Prostate gland (tissue), 2 donors: ENCODE measurements at regions of chr12 and their contacts with region 1.

Region 1: GRCh38 chr12:67648521-67649260 is at the start of gene DYRK2:
- DNase-seq: peak; percentile 75
- H3K4me3 ChIP-seq: peak within 1 kb of the TSS; percentile 86 to 98
- H3K27ac ChIP-seq: peak within 1 kb of the TSS; percentile 87 to 90
- H3K4me1 ChIP-seq: peaks cover 3% of the 10 kb centered on the region
- H3K27me3 ChIP-seq: no peaks in the 10 kb centered on the region
- CTCF ChIP-seq: peak in 2 of 4 experiments; percentile 15 to 18
- POLR2A ChIP-seq: peak; percentile 86
- total RNA-seq, gene DYRK2: 16.7 to 31.9 TPM

Region 2: DNA sequence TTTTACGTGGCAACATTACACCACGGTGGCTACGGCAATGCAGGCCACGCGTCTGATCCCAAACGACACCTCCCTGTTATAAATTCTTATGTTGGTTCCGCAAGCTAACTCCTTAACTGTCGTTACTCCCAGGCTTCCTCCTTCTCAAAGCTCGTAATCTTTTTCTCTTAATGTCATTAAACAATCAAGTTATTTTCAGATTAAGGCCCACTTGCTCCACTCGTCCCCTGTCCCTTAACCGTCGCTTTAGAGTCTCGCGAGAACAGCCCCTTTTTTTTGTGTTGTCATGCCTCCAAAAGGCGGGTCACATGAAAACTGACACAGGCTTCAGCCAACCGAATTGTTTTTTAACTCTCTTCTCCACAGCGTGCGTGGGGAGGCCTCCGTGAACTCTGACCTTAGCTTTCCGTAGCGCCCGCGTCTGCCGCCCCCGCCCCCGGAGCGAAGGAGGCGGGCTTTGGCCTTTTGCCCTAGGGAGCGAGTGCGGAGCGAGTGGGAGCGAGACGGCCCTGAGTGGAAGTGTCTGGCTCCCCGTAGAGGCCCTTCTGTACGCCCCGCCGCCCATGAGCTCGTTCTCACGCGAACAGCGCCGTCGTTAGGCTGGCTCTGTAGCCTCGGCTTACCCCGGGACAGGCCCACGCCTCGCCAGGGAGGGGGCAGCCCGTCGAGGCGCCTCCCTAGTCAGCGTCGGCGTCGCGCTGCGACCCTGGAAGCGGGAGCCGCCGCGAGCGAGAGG is 379.6 kb before region 1 on chr12 and contains the start of gene CAND1:
- intact Hi-C with region 1: loop called (anchors 10 kb)
- DNase-seq: peak; percentile 98
- H3K4me3 ChIP-seq: peak within 1 kb of the TSS; percentile 67 to 88
- H3K27ac ChIP-seq: peak within 1 kb of the TSS; percentile 98 to 99
- H3K4me1 ChIP-seq: no peaks in the 10 kb centered on the region
- H3K27me3 ChIP-seq: no peaks in the 10 kb centered on the region
- CTCF ChIP-seq: no peak
- POLR2A ChIP-seq: peak; percentile 90
- total RNA-seq, gene CAND1: 65.1 to 118 TPM

Region 3: DNA sequence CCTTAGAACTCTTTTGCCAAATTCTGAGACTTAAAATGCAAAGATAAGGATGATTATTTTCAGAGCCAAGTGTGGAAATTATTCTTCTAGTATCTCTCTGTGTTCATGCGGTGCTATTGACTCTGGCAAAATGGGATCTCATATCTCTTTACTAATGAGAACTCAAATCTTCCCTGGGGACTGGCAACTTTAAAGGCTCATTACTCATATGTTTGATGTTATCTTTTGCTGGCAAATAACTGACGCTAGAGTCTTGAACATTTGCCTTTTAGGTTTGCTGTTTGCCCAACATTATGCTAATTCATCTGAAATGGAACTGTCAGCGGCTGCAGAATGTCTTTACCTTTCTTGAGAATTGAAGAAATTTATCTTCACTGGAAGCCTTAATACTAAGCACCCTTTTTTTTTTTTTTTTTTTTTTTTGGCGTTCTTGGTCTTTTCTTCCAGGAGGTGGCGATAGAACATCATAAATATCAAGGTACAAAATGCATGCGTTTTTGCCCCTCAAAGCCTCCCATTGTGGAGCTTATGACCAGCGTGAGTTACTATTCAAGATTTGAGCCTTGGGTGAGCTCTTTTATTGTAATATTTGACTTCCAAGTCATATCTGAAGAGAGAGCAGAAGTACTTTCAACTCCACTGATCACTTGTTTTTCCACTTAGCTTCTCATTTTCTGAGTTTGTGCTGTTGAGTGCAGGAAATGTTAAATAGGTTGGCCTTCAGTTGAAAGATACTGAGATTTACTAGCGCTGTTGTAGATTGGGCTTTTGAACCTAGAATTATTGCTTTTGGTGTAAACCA is 292.9 kb before region 1 on chr12:
- intact Hi-C with region 1: loop called (anchors 5 kb)
- DNase-seq: no peak
- H3K4me3 ChIP-seq: no peak overlapping the region
- H3K27ac ChIP-seq: no peak overlapping the region
- H3K4me1 ChIP-seq: no peaks in the 10 kb centered on the region
- H3K27me3 ChIP-seq: no peaks in the 10 kb centered on the region
- CTCF ChIP-seq: peak in 3 of 4 experiments; percentile 34 to 48 (median 34)
- POLR2A ChIP-seq: no peak

Region 4: GRCh38 chr12:67441736-67442346 is 206.8 kb before region 1 on chr12:
- intact Hi-C with region 1: loop called (anchors 5 kb)
- DNase-seq: peak; percentile 61
- H3K4me3 ChIP-seq: no peak overlapping the region
- H3K27ac ChIP-seq: no peak overlapping the region
- H3K4me1 ChIP-seq: no peaks in the 10 kb centered on the region
- H3K27me3 ChIP-seq: no peaks in the 10 kb centered on the region
- CTCF ChIP-seq: peak; percentile 30 to 72 (median 62)
- POLR2A ChIP-seq: no peak

Region 5: DNA sequence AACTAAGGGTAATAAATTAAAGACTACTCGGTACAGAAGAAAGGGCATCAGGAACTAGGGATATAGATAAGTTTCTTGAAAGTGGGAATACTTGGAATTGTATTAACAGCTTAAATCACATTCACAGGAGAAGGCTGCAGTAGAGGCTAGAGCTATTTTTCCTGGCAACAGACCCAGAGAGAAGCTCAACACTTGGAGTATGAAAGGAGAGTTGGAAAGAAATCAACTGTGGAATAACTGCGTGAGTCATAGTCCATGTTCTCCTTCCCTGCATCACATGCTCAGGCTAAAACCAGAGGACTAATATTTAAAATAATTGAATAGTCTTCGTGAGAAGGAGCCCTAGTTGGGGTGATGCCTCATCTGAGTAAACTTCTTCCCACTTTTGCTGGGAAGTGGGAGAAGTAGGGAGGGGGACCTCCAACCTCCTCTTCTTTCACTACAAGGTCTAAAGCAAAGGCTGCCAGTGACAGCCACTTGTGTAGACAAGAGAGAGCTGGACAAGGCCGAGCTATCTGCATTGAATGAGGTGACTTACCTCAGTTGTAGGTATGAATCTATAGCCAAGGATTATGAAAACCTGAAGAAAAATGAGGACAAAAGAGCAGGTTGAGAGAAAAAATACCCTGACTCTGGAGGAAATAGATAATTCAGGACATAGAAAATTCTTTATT is 32.6 kb after region 1 on chr12:
- intact Hi-C with region 1: no loop called
- DNase-seq: no peak
- H3K4me3 ChIP-seq: no peak overlapping the region
- H3K27ac ChIP-seq: no peak overlapping the region
- H3K4me1 ChIP-seq: no peaks in the 10 kb centered on the region
- H3K27me3 ChIP-seq: no peaks in the 10 kb centered on the region
- CTCF ChIP-seq: no peak
- POLR2A ChIP-seq: no peak

Region 6: DNA sequence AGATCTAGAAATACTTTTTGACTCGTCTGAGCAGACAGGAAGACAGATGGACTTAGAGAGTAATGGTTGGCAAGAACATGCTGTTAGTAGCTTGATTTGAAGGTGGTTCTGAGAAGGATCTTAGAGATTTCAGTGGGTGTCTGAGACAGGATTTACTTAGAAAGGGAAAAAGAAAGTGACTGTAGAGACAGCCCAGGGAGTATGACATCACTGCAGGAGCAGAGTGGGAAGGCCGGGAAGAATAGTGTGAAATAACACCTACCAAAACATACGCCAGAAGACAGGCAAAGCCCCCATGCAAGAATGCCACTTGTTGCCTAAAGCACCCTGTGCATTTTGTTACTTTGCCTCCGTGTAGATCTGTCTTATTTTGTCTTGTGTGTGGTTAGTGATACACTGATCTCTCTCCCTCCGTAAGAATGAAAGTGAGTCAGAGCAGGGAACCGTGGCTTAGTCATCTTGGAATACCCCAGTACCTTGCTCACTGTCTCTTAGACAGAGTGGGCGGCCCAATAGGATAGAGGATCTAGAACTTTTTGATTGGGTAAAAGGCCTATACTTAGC is 179.2 kb after region 1 on chr12:
- intact Hi-C with region 1: loop called (anchors 10 kb)
- DNase-seq: no peak
- H3K4me3 ChIP-seq: peak overlapping the region; percentile 9 to 20
- H3K27ac ChIP-seq: peak overlapping the region; percentile 37 to 69
- H3K4me1 ChIP-seq: no peaks in the 10 kb centered on the region
- H3K27me3 ChIP-seq: no peaks in the 10 kb centered on the region
- CTCF ChIP-seq: no peak
- POLR2A ChIP-seq: no peak

Region 7: DNA sequence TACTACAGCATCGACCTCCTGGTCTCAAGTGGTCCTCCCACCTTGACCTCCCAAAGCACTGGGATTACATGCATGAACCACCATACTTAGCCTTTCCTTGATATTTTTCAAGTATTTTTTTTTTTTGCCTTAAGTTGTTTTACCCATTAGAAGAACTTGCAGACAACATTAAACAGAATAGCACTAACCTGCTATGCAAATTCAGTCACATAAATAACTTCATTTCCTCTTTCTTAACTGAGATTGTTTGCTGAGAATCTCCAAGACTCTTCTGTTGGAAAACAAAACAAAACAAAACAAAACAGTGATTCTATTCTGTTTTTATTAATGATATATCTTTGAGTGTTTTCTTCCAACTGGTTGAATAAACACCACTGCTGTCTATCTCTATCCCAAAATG is 224.7 kb after region 1 on chr12:
- intact Hi-C with region 1: no loop called
- DNase-seq: no peak
- H3K4me3 ChIP-seq: no peak overlapping the region
- H3K27ac ChIP-seq: no peak overlapping the region
- H3K4me1 ChIP-seq: no peaks in the 10 kb centered on the region
- H3K27me3 ChIP-seq: no peaks in the 10 kb centered on the region
- CTCF ChIP-seq: no peak
- POLR2A ChIP-seq: no peak

Region 8: GRCh38 chr12:67943226-67943892 is 294.7 kb after region 1 on chr12:
- intact Hi-C with region 1: loop called (anchors 2 kb)
- DNase-seq: peak; percentile 78
- H3K4me3 ChIP-seq: no peak overlapping the region
- H3K27ac ChIP-seq: no peak overlapping the region
- H3K4me1 ChIP-seq: peaks cover 2% of the 10 kb centered on the region
- H3K27me3 ChIP-seq: no peaks in the 10 kb centered on the region
- CTCF ChIP-seq: peak; percentile 60 to 80 (median 77)
- POLR2A ChIP-seq: no peak

Region 9: GRCh38 chr12:68040450-68041075 is 391.9 kb after region 1 on chr12:
- intact Hi-C with region 1: loop called (anchors 5 kb)
- DNase-seq: peak; percentile 42
- H3K4me3 ChIP-seq: no peak overlapping the region
- H3K27ac ChIP-seq: no peak overlapping the region
- H3K4me1 ChIP-seq: no peaks in the 10 kb centered on the region
- H3K27me3 ChIP-seq: no peaks in the 10 kb centered on the region
- CTCF ChIP-seq: peak in 3 of 4 experiments; percentile 55 to 67 (median 62)
- POLR2A ChIP-seq: no peak